ENCODE measurements at regions of chr4 and their contacts with region 1.

Region 1: DNA sequence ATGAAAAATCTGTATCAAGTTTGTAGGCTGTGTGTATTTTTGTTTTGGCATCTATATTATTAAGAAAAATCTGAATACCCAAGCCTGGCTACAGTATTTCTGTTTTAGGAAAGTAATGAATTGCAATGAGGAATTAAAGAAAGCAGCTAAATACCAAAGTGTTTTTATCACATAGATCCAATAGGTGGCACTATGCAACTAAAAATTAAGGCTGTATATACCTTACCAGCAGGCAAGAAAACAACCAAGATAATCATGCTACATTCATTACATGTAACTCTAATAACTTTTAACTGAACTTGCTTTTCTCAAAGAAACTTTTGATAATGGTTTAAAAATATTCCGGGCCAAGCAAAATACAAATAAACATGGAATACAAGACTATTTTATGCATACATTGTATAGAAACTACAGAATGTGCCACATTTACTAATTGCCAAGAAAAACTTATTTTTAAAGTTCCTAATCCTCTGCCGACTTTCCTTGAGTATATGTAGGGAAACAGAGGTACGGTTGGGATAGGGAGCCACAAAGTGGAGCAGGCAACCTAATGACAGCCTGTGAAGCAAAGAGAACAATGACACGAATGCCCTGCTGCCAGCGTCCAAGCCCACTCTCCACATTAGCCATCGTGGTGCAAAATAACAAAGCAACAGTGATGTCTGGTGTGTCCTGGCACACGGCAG is 63.7 kb downstream of the SEC24D start:
- DNase-seq: no peak
- ATAC-seq: peak; percentile 68 to 81 (median 74)
- H3K4me3 ChIP-seq: peak overlapping the region in 5 of 12 donors; percentile 11 to 38 (median 19)
- H3K27ac ChIP-seq: peak overlapping the region; percentile 1 to 87 (median 64)
- H3K4me1 ChIP-seq: peaks cover 4 to 85% (median 52%) of the 10 kb centered on the region in 12 donors
- H3K27me3 ChIP-seq: no peaks in the 10 kb centered on the region
- CTCF ChIP-seq: peak; percentile 46 to 76 (median 64)
- POLR2A ChIP-seq: no peak

Region 2: GRCh38 chr4:118746292-118746919 is 25.8 kb before region 1 on chr4:
- intact Hi-C with region 1: loop called in 2 of 10 experiments (anchors 2 kb)
- DNase-seq: peak in 4 of 5 donors; percentile 51 to 79 (median 66)
- ATAC-seq: peak; percentile 93 to 96 (median 94)
- H3K4me3 ChIP-seq: no peak overlapping the region
- H3K27ac ChIP-seq: peak overlapping the region; percentile 61 to 86 (median 78)
- H3K4me1 ChIP-seq: peaks cover 0 to 60% (median 31%) of the 10 kb centered on the region in 12 donors
- H3K27me3 ChIP-seq: no peaks in the 10 kb centered on the region
- CTCF ChIP-seq: no peak
- POLR2A ChIP-seq: no peak

Region 3: DNA sequence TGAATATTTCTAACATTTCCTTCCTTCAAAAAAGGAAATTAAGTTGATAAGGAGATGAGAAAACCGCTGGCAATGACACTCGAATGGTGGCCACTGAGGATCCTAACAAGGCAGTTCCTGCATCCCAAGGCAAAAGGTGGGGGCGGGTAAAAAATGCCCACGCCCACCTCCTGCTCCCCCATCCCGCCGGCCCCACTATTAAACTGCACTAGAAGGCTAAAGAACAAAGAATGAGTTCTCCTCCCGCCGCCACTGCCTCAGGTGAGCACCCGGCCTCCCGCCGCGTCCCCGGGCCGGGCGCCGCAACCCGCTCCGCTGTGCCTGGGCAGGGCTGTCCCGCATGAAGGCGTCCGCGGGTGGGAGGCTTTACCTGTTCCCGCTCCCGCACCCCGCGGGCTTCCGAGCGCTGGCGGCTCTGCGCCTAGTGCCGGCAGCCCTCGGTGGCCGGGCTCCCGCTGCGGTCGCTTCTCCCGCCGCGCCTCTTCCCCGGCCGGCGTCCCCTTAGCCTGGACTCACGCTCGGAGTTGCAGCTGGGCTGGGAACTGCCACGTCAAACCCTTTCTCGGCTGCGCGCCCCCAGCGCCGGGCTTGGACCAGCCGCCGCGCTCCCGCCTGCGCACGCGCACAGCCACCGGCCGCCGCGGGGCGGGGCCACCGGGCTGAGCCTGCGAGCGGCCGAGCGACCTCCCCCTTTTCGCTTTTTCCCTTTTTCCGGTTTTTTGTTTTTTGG is 63.5 kb after region 1 on chr4 and contains the start of gene SEC24D:
- intact Hi-C with region 1: loop called in 1 of 10 experiments (anchors 5 kb)
- DNase-seq: peak; percentile 89 to 95 (median 93)
- ATAC-seq: peak; percentile 83 to 97 (median 91)
- H3K4me3 ChIP-seq: peak within 1 kb of the TSS; percentile 74 to 100 (median 94)
- H3K27ac ChIP-seq: peak within 1 kb of the TSS; percentile 79 to 98 (median 93)
- H3K4me1 ChIP-seq: peaks cover 0 to 46% (median 24%) of the 10 kb centered on the region in 12 donors
- H3K27me3 ChIP-seq: no peaks in the 10 kb centered on the region
- CTCF ChIP-seq: peak in 4 of 12 donors; percentile 3 to 36 (median 22)
- POLR2A ChIP-seq: peak in 1 of 2 donors; percentile 75
- total RNA-seq, gene SEC24D: 13.3 to 36.4 (median 14.8) TPM

Region 4: GRCh38 chr4:118898684-118899138 is 126.5 kb after region 1 on chr4:
- intact Hi-C with region 1: loop called in 1 of 10 experiments (anchors 5 kb)
- DNase-seq: peak; percentile 50 to 83 (median 69)
- ATAC-seq: peak; percentile 88 to 93 (median 91)
- H3K4me3 ChIP-seq: peak overlapping the region in 1 of 12 donors; percentile 6
- H3K27ac ChIP-seq: peak overlapping the region; percentile 58 to 93 (median 88)
- H3K4me1 ChIP-seq: peaks cover 0 to 79% (median 44%) of the 10 kb centered on the region in 12 donors
- H3K27me3 ChIP-seq: no peaks in the 10 kb centered on the region
- CTCF ChIP-seq: no peak
- POLR2A ChIP-seq: peak in 1 of 2 donors; percentile 25

Region 5: GRCh38 chr4:118968005-118968404 is 195.8 kb after region 1 on chr4:
- intact Hi-C with region 1: loop called (anchors 2 to 5 kb)
- DNase-seq: peak in 4 of 5 donors; percentile 48 to 65 (median 58)
- ATAC-seq: peak; percentile 57 to 83 (median 76)
- H3K4me3 ChIP-seq: peak overlapping the region in 3 of 12 donors; percentile 4 to 18 (median 5)
- H3K27ac ChIP-seq: peak overlapping the region; percentile 38 to 86 (median 72)
- H3K4me1 ChIP-seq: peaks cover 2 to 87% (median 51%) of the 10 kb centered on the region in 12 donors
- H3K27me3 ChIP-seq: no peaks in the 10 kb centered on the region
- CTCF ChIP-seq: no peak
- POLR2A ChIP-seq: no peak

Measured in heart left ventricle (tissue), 16 donors.